ENCODE measurements at regions of chr14 and their contacts with region 1.

Region 1: GRCh38 chr14:50714450-50715073 is 46.5 kb upstream of the SAV1 start:
- DNase-seq: peak; percentile 67
- ATAC-seq: peak; percentile 93
- H3K4me3 ChIP-seq: no peak overlapping the region
- H3K27ac ChIP-seq: no peak overlapping the region
- H3K4me1 ChIP-seq: no peaks in the 10 kb centered on the region
- H3K27me3 ChIP-seq: no peaks in the 10 kb centered on the region
- CTCF ChIP-seq: peak; percentile 79

Region 2: GRCh38 chr14:50452979-50453705 is 261.4 kb before region 1 on chr14:
- CTCF ChIA-PET with region 1: no interaction called
- POLR2A ChIA-PET with region 1: no interaction called
- intact Hi-C with region 1: no loop called
- DNase-seq: peak; percentile 80
- ATAC-seq: peak; percentile 82
- H3K4me3 ChIP-seq: 0 out of 2 replicates have a peak overlapping the region, but pooled peaks have one; percentile 10
- H3K27ac ChIP-seq: peak overlapping the region; percentile 94
- H3K4me1 ChIP-seq: peaks cover 31% of the 10 kb centered on the region
- H3K27me3 ChIP-seq: no peaks in the 10 kb centered on the region
- CTCF ChIP-seq: no peak

Region 3: GRCh38 chr14:50619556-50620141 is 94.9 kb before region 1 on chr14:
- CTCF ChIA-PET with region 1: interaction called, 19 read pairs
- POLR2A ChIA-PET with region 1: interaction called, 15 read pairs
- intact Hi-C with region 1: loop called (anchors 1 kb)
- DNase-seq: peak; percentile 72
- ATAC-seq: peak; percentile 93
- H3K4me3 ChIP-seq: no peak overlapping the region
- H3K27ac ChIP-seq: no peak overlapping the region
- H3K4me1 ChIP-seq: peaks cover 8% of the 10 kb centered on the region
- H3K27me3 ChIP-seq: no peaks in the 10 kb centered on the region
- CTCF ChIP-seq: peak; percentile 89

Region 4: DNA sequence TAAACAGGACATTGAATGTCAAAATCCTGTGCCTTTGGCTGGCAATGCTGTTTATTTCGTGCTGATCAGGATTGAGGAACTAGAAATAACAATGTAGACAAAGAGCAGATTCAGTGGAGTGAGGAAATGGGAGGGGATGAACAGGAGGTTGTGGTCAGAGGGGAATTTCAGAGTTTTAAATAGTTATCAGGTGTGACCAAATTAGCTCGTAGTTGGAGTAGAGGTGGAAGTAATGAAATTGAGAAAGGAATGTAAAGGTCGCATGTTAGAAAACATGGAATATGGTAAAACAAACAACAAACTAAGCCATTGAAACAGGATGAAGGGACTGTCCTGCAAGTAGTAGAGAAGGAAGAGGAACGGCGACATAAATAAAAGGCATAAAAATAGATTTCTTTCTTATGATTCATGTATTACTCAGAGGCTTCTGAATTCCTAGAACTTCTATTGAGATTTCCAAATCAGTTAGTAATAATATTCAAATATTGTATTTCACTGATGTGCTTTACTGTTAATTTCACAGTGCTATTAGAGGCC is 37.0 kb before region 1 on chr14:
- CTCF ChIA-PET with region 1: interaction called, 5 read pairs
- POLR2A ChIA-PET with region 1: no interaction called
- intact Hi-C with region 1: loop called (anchors 5 kb)
- DNase-seq: peak; percentile 88
- ATAC-seq: peak; percentile 91
- H3K4me3 ChIP-seq: peak overlapping the region; percentile 54
- H3K27ac ChIP-seq: peak overlapping the region; percentile 80
- H3K4me1 ChIP-seq: peaks cover 44% of the 10 kb centered on the region
- H3K27me3 ChIP-seq: no peaks in the 10 kb centered on the region
- CTCF ChIP-seq: no peak

Region 5: GRCh38 chr14:50762001-50762930 is 47.7 kb after region 1 on chr14:
- CTCF ChIA-PET with region 1: interaction called, 10 read pairs
- POLR2A ChIA-PET with region 1: no interaction called
- intact Hi-C with region 1: no loop called
- DNase-seq: peak; percentile 86
- ATAC-seq: peak; percentile 36
- H3K4me3 ChIP-seq: peak overlapping the region; percentile 25; the same call in 1 of the 2 replicates
- H3K27ac ChIP-seq: peak overlapping the region; percentile 94
- H3K4me1 ChIP-seq: peaks cover 29% of the 10 kb centered on the region
- H3K27me3 ChIP-seq: no peaks in the 10 kb centered on the region
- CTCF ChIP-seq: no peak

Measured in PC-3 (cell line).